Ascending aorta (tissue), 2 donors: ENCODE measurements at regions of chr5 and their contacts with region 1.

Region 1: DNA sequence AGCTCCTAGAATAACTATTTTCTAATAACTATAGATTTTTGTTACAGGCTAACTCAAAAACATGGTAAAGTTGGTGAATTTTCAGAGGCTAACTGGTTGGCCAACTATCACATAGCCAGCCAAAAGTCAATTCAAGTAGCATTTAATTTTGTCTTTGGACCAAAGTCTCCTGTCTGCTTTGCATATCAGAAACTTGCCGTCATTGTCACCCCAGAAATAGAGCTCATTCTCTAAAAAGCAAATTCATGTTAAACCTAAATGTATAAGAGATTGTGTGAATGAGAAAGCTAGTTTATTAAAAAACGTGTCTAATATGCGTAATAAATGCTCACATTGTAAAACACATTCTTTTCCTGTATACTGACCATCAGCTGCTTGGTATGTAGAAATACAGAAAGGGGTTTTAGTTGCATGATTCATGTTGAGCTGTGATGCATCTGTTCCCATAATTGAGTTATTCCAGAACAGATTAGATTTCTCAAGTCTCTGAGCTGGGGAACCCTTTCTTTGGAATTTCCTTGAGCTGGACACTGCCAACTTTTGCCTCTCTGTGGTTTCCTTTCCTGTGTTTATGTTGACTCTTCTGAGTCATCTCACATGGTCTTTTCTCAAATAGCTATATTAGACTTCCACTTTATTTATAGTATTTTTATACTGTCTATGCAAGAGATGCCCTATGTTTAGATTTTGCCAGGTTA is 7.3 kb downstream of the SRFBP1 start:
- DNase-seq: peak in 1 of 2 donors; percentile 62
- H3K4me3 ChIP-seq: no peak overlapping the region
- H3K27ac ChIP-seq: peak overlapping the region; percentile 49
- H3K4me1 ChIP-seq: peaks cover 0 to 16% of the 10 kb centered on the region in 2 donors
- H3K27me3 ChIP-seq: no peaks in the 10 kb centered on the region
- CTCF ChIP-seq: no peak

Region 2: GRCh38 chr5:122101636-122102285 is 132.7 kb after region 1 on chr5:
- intact Hi-C with region 1: loop called (anchors 2 kb)
- DNase-seq: no peak
- H3K4me3 ChIP-seq: no peak overlapping the region
- H3K27ac ChIP-seq: no peak overlapping the region
- H3K4me1 ChIP-seq: no peaks in the 10 kb centered on the region
- H3K27me3 ChIP-seq: no peaks in the 10 kb centered on the region
- CTCF ChIP-seq: peak; percentile 45 to 71 (median 56)

Region 3: GRCh38 chr5:122156724-122157325 is 187.8 kb after region 1 on chr5:
- intact Hi-C with region 1: loop called (anchors 10 kb)
- DNase-seq: no peak
- H3K4me3 ChIP-seq: no peak overlapping the region
- H3K27ac ChIP-seq: no peak overlapping the region
- H3K4me1 ChIP-seq: peaks cover 3 to 29% of the 10 kb centered on the region in 2 donors
- H3K27me3 ChIP-seq: no peaks in the 10 kb centered on the region
- CTCF ChIP-seq: peak in 2 of 3 experiments; percentile 17 to 52